MCF 10A (cell line): ENCODE measurements at regions of chr6 and their contacts with region 1.

Region 1: GRCh38 chr6:4775584-4776494 is at the start of gene CDYL:
- DNase-seq: peak; percentile 84
- H3K4me3 Mint-ChIP-seq: peak within 1 kb of the TSS; percentile 85
- H3K27ac Mint-ChIP-seq: peak within 1 kb of the TSS; percentile 39
- H3K4me1 Mint-ChIP-seq: peaks cover 12% of the 10 kb centered on the region
- H3K27me3 Mint-ChIP-seq: no peaks in the 10 kb centered on the region
- CTCF ChIP-seq: peak; percentile 27
- total RNA-seq, gene CDYL: 48.9 and 56.8 TPM in 2 replicates

Region 2: GRCh38 chr6:4351520-4352315 is 424.1 kb before region 1 on chr6:
- CTCF ChIA-PET with region 1: no interaction called
- POLR2A ChIA-PET with region 1: interaction called, 4 read pairs
- intact Hi-C with region 1: loop called (anchors 1 kb)
- DNase-seq: peak; percentile 89
- H3K4me3 Mint-ChIP-seq: peak overlapping the region; percentile 66
- H3K27ac Mint-ChIP-seq: peak overlapping the region; percentile 84
- H3K4me1 Mint-ChIP-seq: peaks cover 42% of the 10 kb centered on the region
- H3K27me3 Mint-ChIP-seq: no peaks in the 10 kb centered on the region
- CTCF ChIP-seq: no peak

Region 3: GRCh38 chr6:4647414-4648365 is 128.1 kb before region 1 on chr6:
- CTCF ChIA-PET with region 1: interaction called, 3 read pairs
- POLR2A ChIA-PET with region 1: interaction called, 3 read pairs
- intact Hi-C with region 1: loop called (anchors 5 kb)
- DNase-seq: peak; percentile 79
- H3K4me3 Mint-ChIP-seq: peak overlapping the region; percentile 76
- H3K27ac Mint-ChIP-seq: peak overlapping the region; percentile 81
- H3K4me1 Mint-ChIP-seq: peaks cover 24% of the 10 kb centered on the region
- H3K27me3 Mint-ChIP-seq: no peaks in the 10 kb centered on the region
- CTCF ChIP-seq: no peak

Region 4: GRCh38 chr6:4936681-4937041 is 160.8 kb after region 1 on chr6:
- CTCF ChIA-PET with region 1: interaction called, 4 read pairs
- POLR2A ChIA-PET with region 1: interaction called, 5 read pairs
- intact Hi-C with region 1: loop called (anchors 2 kb)
- DNase-seq: peak; percentile 34
- H3K4me3 Mint-ChIP-seq: no peak overlapping the region
- H3K27ac Mint-ChIP-seq: no peak overlapping the region
- H3K4me1 Mint-ChIP-seq: peaks cover 18% of the 10 kb centered on the region
- H3K27me3 Mint-ChIP-seq: no peaks in the 10 kb centered on the region
- CTCF ChIP-seq: peak; percentile 56